T-cell (primary cell): ENCODE measurements at regions of chr18 and their contacts with region 1.

Region 1: GRCh38 chr18:58321986-58322385 is 278.0 kb downstream of the NEDD4L start:
- DNase-seq: peak in 32 of 35 experiments; percentile 12 to 71 (median 34)
- ATAC-seq: peak; percentile 83 to 96 (median 90)
- H3K4me3 ChIP-seq: no peak overlapping the region
- H3K4me3 Mint-ChIP-seq: peak overlapping the region; percentile 32 to 50 (median 50)
- H3K27ac ChIP-seq: peak overlapping the region; percentile 19
- H3K27ac Mint-ChIP-seq: peak overlapping the region; percentile 24 to 77
- H3K4me1 ChIP-seq: peaks cover 0 to 14% of the 10 kb centered on the region in 2 experiments
- H3K4me1 Mint-ChIP-seq: peaks cover 10 to 24% (median 19%) of the 10 kb centered on the region in 3 donors
- H3K27me3 ChIP-seq: no peaks in the 10 kb centered on the region
- H3K27me3 Mint-ChIP-seq: no peaks in the 10 kb centered on the region

Region 2: GRCh38 chr18:57209713-57210661 is 1112.0 kb before region 1 on chr18:
- CTCF ChIA-PET with region 1: no interaction called
- POLR2A ChIA-PET with region 1: no interaction called
- DNase-seq: no peak
- ATAC-seq: no peak
- H3K4me3 ChIP-seq: no peak overlapping the region
- H3K4me3 Mint-ChIP-seq: peak overlapping the region in 2 of 3 donors; percentile 42 to 61
- H3K27ac ChIP-seq: no peak overlapping the region
- H3K27ac Mint-ChIP-seq: no peak overlapping the region
- H3K4me1 ChIP-seq: peaks cover 0 to 6% of the 10 kb centered on the region in 2 experiments
- H3K4me1 Mint-ChIP-seq: peaks cover 7 to 13% (median 8%) of the 10 kb centered on the region in 3 donors
- H3K27me3 ChIP-seq: peaks cover 0 to 19% of the 10 kb centered on the region in 2 experiments
- H3K27me3 Mint-ChIP-seq: peaks cover 27 to 50% of the 10 kb centered on the region in 2 donors

Region 3: DNA sequence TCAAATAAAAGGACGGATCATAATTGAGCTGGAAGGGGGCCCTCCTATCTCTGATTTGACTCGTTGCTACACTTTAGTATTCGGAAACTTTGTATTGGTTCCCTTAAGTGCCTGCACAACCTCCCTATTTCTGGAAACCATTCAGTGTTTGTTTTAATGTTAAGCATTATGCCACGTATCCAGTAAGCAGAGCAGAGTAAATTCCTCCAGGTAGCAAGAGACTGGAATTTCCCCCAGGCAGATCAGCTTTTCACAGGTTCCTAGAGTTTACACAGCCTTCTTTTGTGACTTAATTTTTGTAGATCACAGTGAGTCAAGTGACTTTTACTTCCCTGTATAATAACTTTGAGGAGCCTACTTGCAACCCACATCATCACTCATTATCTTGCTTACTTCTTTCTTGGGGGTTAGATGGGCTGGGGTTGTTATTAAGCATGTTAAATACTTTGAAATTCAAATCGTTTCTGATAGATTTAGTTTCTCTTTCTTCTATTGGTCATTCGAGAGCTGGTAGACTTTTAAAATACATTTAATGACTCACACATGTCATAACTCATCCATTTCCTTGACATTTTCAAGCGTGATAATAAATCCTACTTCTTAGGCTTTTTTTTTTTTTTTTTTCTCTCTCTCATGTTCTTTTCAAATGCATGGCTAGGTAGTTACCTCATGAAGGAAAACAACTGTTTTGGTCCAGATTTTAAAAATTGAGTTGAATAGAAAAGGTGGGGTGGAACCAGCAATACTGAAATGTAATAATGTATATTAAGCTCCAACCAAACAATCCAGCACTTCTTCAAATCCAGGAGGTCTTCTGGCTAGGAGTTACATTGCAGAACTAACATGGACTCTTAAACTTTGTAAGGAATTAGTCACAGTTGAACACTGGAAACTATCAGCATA is 58.7 kb before region 1 on chr18:
- CTCF ChIA-PET with region 1: no interaction called
- POLR2A ChIA-PET with region 1: no interaction called
- DNase-seq: no peak
- ATAC-seq: no peak
- H3K4me3 ChIP-seq: no peak overlapping the region
- H3K4me3 Mint-ChIP-seq: no peak overlapping the region
- H3K27ac ChIP-seq: no peak overlapping the region
- H3K27ac Mint-ChIP-seq: no peak overlapping the region
- H3K4me1 ChIP-seq: no peaks in the 10 kb centered on the region
- H3K4me1 Mint-ChIP-seq: peaks cover 5 to 7% (median 7%) of the 10 kb centered on the region in 3 donors
- H3K27me3 ChIP-seq: no peaks in the 10 kb centered on the region
- H3K27me3 Mint-ChIP-seq: peaks cover 0 to 3% of the 10 kb centered on the region in 2 donors

Region 4: DNA sequence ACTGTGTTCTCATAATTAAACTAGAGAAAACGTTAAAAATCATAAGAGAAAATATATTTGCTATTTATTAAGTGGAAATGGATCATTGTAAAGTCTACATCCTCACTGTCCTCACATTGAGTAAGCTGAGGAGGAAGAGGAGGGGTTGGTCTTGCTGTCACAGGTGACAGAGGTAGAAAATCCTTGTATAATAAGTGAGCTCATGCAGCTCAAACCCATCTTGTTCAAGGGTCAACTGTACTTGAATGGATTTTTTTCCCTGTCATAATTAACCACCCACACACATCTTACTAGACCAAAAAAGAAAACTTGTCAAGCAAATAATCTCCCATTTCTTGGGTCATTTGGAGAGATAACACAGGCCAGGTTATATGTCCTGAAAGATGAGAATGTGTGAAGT is 46.8 kb before region 1 on chr18:
- CTCF ChIA-PET with region 1: no interaction called
- POLR2A ChIA-PET with region 1: no interaction called
- DNase-seq: no peak
- ATAC-seq: no peak
- H3K4me3 ChIP-seq: no peak overlapping the region
- H3K4me3 Mint-ChIP-seq: no peak overlapping the region
- H3K27ac ChIP-seq: no peak overlapping the region
- H3K27ac Mint-ChIP-seq: no peak overlapping the region
- H3K4me1 ChIP-seq: peaks cover 10 to 12% of the 10 kb centered on the region in 2 experiments
- H3K4me1 Mint-ChIP-seq: peaks cover 15 to 21% (median 16%) of the 10 kb centered on the region in 3 donors
- H3K27me3 ChIP-seq: peaks cover 0 to 2% of the 10 kb centered on the region in 2 experiments
- H3K27me3 Mint-ChIP-seq: no peaks in the 10 kb centered on the region

Region 5: GRCh38 chr18:58303363-58303762 is 18.6 kb before region 1 on chr18:
- CTCF ChIA-PET with region 1: interaction called in 1 of 2 experiments, 21 read pairs
- POLR2A ChIA-PET with region 1: no interaction called
- DNase-seq: peak in 18 of 35 experiments; percentile 7 to 66 (median 19)
- ATAC-seq: peak in 3 of 4 experiments; percentile 65 to 97 (median 79)
- H3K4me3 ChIP-seq: no peak overlapping the region
- H3K4me3 Mint-ChIP-seq: peak overlapping the region in 2 of 3 donors; percentile 13 to 42
- H3K27ac ChIP-seq: peak overlapping the region; percentile 21
- H3K27ac Mint-ChIP-seq: peak overlapping the region in 1 of 2 donors; percentile 61
- H3K4me1 ChIP-seq: peaks cover 18 to 20% of the 10 kb centered on the region in 2 experiments
- H3K4me1 Mint-ChIP-seq: peaks cover 15 to 33% (median 19%) of the 10 kb centered on the region in 3 donors
- H3K27me3 ChIP-seq: peaks cover 0 to 5% of the 10 kb centered on the region in 2 experiments
- H3K27me3 Mint-ChIP-seq: peaks cover 0 to 6% of the 10 kb centered on the region in 2 donors

Region 6: GRCh38 chr18:58730618-58731017 is 408.6 kb after region 1 on chr18:
- CTCF ChIA-PET with region 1: no interaction called
- POLR2A ChIA-PET with region 1: interaction called in 1 of 2 experiments, 11 read pairs
- DNase-seq: no peak
- ATAC-seq: no peak
- H3K4me3 ChIP-seq: no peak overlapping the region
- H3K4me3 Mint-ChIP-seq: no peak overlapping the region
- H3K27ac ChIP-seq: no peak overlapping the region
- H3K27ac Mint-ChIP-seq: no peak overlapping the region
- H3K4me1 ChIP-seq: no peaks in the 10 kb centered on the region
- H3K4me1 Mint-ChIP-seq: peaks cover 4 to 12% (median 6%) of the 10 kb centered on the region in 3 donors
- H3K27me3 ChIP-seq: no peaks in the 10 kb centered on the region
- H3K27me3 Mint-ChIP-seq: no peaks in the 10 kb centered on the region

Region 7: GRCh38 chr18:58858616-58859468 is 536.9 kb after region 1 on chr18:
- CTCF ChIA-PET with region 1: no interaction called
- POLR2A ChIA-PET with region 1: no interaction called
- DNase-seq: no peak
- ATAC-seq: no peak
- H3K4me3 ChIP-seq: no peak overlapping the region
- H3K4me3 Mint-ChIP-seq: no peak overlapping the region
- H3K27ac ChIP-seq: no peak overlapping the region
- H3K27ac Mint-ChIP-seq: no peak overlapping the region
- H3K4me1 ChIP-seq: peaks cover 0 to 9% of the 10 kb centered on the region in 2 experiments
- H3K4me1 Mint-ChIP-seq: peaks cover 6 to 7% (median 7%) of the 10 kb centered on the region in 3 donors
- H3K27me3 ChIP-seq: peaks cover 2 to 20% of the 10 kb centered on the region in 2 experiments
- H3K27me3 Mint-ChIP-seq: peaks cover 41 to 47% of the 10 kb centered on the region in 2 donors